Posterior vena cava (tissue), 2 donors: ENCODE measurements at regions of chr16 and their contacts with region 1.

Region 1: DNA sequence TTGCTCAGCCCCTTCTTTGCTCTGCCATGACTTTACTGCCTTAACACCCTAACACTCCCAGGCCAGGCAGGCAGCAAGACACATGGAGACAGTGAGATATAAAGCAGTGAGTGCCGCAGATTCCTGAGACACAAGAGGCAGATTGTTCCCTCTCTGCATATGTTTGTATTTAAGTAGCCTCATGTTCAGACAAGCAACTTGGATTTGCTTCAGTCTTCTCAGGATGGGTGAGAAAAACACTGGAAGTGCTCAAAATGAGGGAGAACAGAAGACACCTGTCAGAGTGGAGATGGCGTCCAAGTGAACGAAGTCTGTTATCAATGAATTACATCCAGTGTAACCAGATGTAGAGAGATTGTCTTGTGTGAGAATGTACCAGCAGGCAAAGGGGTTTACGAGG is 86.8 kb downstream of the CES1 start:
- DNase-seq: peak; percentile 14

Region 2: GRCh38 chr16:55678161-55678821 is 67.8 kb before region 1 on chr16:
- intact Hi-C with region 1: loop called in 1 of 2 experiments (anchors 2 kb)
- DNase-seq: no peak